ENCODE measurements at regions of chr5 and their contacts with region 1.

Region 1: GRCh38 chr5:78359831-78360673 is at the start of gene SCAMP1:
- H3K4me3 ChIP-seq: peak within 1 kb of the TSS; percentile 93
- H3K27ac ChIP-seq: peak within 1 kb of the TSS; percentile 95
- H3K4me1 ChIP-seq: 0 out of 2 replicates have a peak, but pooled peaks cover 4% of the 10 kb centered on the region
- CTCF ChIP-seq: peak; percentile 33; the same call in 1 of the 2 replicates

Region 2: DNA sequence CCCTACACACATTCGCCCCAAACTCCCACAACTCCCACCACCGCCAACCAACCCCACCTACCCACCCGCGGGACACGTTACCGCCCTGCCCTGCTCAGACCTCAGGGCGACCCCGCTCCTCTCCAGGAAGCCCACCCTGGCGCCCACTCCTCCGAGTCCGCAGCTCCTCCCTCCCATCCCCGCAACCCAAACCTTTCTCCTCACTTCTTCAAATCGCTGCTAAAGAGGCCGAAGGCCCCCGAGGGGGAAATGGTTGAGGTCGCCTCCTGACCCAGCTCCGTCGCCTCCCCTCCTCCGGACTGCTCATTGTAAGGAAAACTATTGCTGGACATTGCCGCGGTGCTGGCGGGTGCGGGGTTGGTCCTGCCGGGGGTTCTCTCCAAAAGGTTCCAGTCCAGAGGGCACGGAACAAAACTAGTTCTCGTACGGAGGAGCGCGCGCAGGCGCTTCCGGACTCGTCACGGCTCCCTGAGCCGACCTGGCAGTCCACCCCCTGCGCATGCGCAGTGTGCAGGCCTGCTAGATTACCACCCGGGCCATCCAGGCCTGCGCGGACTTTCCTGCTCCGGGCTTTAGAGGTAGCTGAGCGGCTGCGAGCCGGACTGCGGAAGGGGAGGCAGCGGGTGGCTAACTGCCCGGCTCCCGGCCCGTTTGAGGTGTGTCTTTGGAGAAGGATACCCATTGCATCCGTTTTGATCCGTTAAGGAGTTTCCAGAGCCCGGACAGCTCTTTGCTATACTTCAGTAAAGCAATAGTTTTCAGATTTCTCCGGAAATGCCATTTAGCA is 65.6 kb before region 1 on chr5 and contains the start of gene AP3B1:
- CTCF ChIA-PET with region 1: interaction called, 9 read pairs
- POLR2A ChIA-PET with region 1: interaction called, 38 read pairs
- H3K4me3 ChIP-seq: peak within 1 kb of the TSS; percentile 72
- H3K27ac ChIP-seq: peak within 1 kb of the TSS; percentile 62
- H3K4me1 ChIP-seq: no peaks in the 10 kb centered on the region
- CTCF ChIP-seq: no peak

Measured in HEK293 (cell line).